ENCODE measurements at regions of chr14 and their contacts with region 1.

Region 1: GRCh38 chr14:102509744-102510615 is at the start of gene ANKRD9:
- DNase-seq: peak; percentile 91
- H3K4me3 Mint-ChIP-seq: peak within 1 kb of the TSS; percentile 84
- H3K27ac Mint-ChIP-seq: no peak within 1 kb of the TSS
- H3K4me1 Mint-ChIP-seq: peaks cover 8% of the 10 kb centered on the region
- H3K27me3 Mint-ChIP-seq: no peaks in the 10 kb centered on the region
- total RNA-seq, gene ANKRD9: 11.5 to 13.3 TPM

Region 2: GRCh38 chr14:102362545-102363181 is 147.3 kb before region 1 on chr14 and contains the starts of genes CINP and TECPR2:
- CTCF ChIA-PET with region 1: no interaction called
- intact Hi-C with region 1: loop called (anchors 2 kb)
- DNase-seq: peak; percentile 99
- H3K4me3 Mint-ChIP-seq: no peak within 1 kb of the TSS
- H3K27ac Mint-ChIP-seq: peak within 1 kb of the TSS; percentile 94
- H3K4me1 Mint-ChIP-seq: peaks cover 30% of the 10 kb centered on the region
- H3K27me3 Mint-ChIP-seq: no peaks in the 10 kb centered on the region
- total RNA-seq, gene CINP: 45.3 to 46.2 TPM
- total RNA-seq, gene TECPR2: 2.3 to 3.6 TPM

Region 3: GRCh38 chr14:102530828-102531478 is 21.0 kb after region 1 on chr14:
- CTCF ChIA-PET with region 1: no interaction called
- intact Hi-C with region 1: no loop called
- DNase-seq: no peak
- H3K4me3 Mint-ChIP-seq: no peak overlapping the region
- H3K27ac Mint-ChIP-seq: no peak overlapping the region
- H3K4me1 Mint-ChIP-seq: peaks cover under 1% of the 10 kb centered on the region
- H3K27me3 Mint-ChIP-seq: no peaks in the 10 kb centered on the region

Region 4: DNA sequence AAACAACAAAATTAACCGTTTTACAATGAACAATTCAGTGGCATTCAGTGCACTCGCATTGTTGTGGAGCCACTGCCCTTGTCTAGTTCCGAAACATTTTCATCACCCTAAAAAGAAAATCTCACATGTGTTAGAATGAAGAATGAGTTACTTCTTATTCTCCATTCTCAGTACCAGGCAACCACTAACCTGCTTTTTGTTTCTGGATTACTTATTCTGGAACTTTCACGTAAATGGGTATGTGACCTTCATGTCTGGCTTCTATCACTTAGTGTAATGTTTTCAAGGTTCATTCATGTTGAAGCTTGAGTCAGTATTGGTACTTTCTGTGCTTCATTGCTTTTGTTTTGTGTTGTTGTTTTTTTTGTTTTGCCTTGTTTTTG is 98.1 kb after region 1 on chr14:
- CTCF ChIA-PET with region 1: no interaction called
- intact Hi-C with region 1: no loop called
- DNase-seq: no peak
- H3K4me3 Mint-ChIP-seq: no peak overlapping the region
- H3K27ac Mint-ChIP-seq: peak overlapping the region; percentile 53
- H3K4me1 Mint-ChIP-seq: peaks cover 41% of the 10 kb centered on the region
- H3K27me3 Mint-ChIP-seq: no peaks in the 10 kb centered on the region

Region 5: DNA sequence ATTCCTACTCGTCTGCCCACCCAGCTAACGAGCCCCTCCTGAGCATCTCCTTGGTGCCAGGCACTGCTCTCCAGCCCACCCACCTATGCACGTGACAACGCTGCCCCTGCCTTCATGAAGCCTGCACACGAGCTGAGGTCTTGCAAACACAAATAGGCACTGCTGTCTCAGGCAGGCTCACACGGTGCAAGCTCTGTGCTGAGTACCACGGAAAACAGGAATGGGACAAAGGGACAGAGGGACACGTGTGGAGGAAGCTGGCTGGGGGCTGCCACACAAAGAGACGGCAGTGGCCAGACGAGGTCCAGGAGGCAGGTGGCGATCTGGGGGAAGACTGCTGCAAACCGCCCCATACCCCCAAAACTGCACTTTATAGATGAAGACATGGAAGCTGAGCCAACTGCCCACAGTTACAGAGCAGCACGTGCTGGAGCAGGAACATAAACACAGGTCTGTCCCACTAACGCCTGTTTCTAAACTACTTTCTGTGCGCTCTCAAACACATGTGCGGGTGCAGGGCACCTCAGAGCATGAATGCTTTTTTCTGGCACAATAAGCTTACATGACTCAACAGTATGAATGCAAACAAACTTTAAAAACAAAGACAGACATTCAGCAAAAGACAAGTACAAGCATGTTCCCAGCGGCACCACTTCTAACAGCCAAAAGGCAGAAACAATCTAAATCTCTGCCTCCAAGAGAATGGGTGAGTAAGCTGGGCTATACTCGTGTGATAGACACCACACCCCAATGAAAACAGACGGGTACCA is 477.0 kb after region 1 on chr14:
- CTCF ChIA-PET with region 1: no interaction called
- intact Hi-C with region 1: no loop called
- DNase-seq: no peak
- H3K4me3 Mint-ChIP-seq: no peak overlapping the region
- H3K27ac Mint-ChIP-seq: no peak overlapping the region
- H3K4me1 Mint-ChIP-seq: no peaks in the 10 kb centered on the region
- H3K27me3 Mint-ChIP-seq: no peaks in the 10 kb centered on the region

Region 6: DNA sequence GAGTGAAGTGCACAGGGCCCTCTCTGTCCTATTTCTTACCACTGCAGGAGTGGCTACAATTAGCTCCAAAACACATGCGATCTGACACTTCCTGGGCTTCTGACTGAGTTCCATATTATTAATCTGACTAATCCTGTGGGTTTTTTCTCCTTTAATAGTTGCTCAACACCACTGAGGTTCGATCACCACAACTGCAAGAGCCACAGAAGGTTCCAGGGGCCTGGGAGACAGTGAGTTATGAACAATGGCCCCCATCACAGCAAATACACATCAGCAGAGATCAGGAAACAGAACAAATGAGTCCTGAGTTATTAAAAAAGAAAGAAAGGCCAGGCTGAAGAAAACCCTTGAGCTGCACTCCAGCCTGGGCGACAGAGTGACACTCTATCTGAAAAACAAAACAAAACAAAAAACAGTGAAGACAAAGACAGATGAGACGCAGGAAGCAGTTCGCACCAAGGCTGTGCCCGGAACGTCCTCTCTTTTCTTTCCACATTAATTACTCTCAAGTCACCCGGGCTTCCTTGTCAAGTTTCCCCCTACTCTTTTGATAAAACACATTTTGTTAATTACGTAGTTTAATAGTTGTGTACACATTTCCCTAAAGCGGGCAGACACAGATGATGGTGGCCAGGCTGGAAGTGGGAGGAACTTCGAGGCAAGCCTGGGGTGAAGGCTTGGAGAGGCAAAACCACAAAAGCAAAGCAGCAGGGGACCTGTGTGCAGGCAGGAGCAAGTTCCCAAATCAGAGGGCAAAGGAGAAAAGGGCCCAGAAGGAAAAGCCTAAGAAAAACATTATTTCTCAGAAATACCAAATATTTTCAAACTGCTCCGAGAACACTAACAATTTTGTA is 504.7 kb after region 1 on chr14:
- CTCF ChIA-PET with region 1: no interaction called
- intact Hi-C with region 1: no loop called
- DNase-seq: no peak
- H3K4me3 Mint-ChIP-seq: no peak overlapping the region
- H3K27ac Mint-ChIP-seq: no peak overlapping the region
- H3K4me1 Mint-ChIP-seq: peaks cover 6% of the 10 kb centered on the region
- H3K27me3 Mint-ChIP-seq: peaks cover 1% of the 10 kb centered on the region

Measured in activated naive CD4-positive, alpha-beta T cell treated with anti-CD3 and anti-CD28 coated beads for 36 hours (primary cell).